ENCODE measurements at regions of chr3 and their contacts with region 1.

Region 1: GRCh38 chr3:43870120-43870519 is 179.4 kb downstream of the ABHD5 start:
- H3K4me3 ChIP-seq: no peak overlapping the region
- H3K27ac ChIP-seq: no peak overlapping the region
- H3K4me1 ChIP-seq: no peaks in the 10 kb centered on the region
- CTCF ChIP-seq: no peak

Region 2: GRCh38 chr3:43279082-43279481 is 591.0 kb before region 1 on chr3:
- CTCF ChIA-PET with region 1: no interaction called
- POLR2A ChIA-PET with region 1: no interaction called
- H3K4me3 ChIP-seq: no peak overlapping the region
- H3K27ac ChIP-seq: no peak overlapping the region
- H3K4me1 ChIP-seq: no peaks in the 10 kb centered on the region
- CTCF ChIP-seq: no peak

Region 3: DNA sequence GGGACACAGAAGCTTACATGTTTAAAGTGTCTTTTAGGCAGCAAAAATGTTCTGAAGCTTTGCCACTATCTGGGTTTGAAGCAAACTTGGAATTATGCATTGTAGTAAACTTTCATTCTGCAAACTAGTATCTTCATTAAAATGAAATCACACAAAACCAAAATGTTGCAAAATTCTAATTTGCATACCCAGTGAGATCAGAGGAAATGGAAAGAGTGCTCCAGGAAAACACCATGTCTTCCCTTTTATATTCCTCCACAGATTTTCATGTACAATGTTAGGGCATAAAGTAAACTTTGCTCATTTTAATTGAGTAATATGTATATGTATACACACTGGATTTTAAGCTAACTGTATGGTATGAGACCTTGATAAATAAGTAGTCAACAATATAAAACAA is 272.2 kb before region 1 on chr3:
- CTCF ChIA-PET with region 1: no interaction called
- POLR2A ChIA-PET with region 1: no interaction called
- H3K4me3 ChIP-seq: no peak overlapping the region
- H3K27ac ChIP-seq: no peak overlapping the region
- H3K4me1 ChIP-seq: no peaks in the 10 kb centered on the region
- CTCF ChIP-seq: no peak

Region 4: GRCh38 chr3:43676441-43676840 is 193.7 kb before region 1 on chr3:
- CTCF ChIA-PET with region 1: no interaction called
- POLR2A ChIA-PET with region 1: no interaction called
- H3K4me3 ChIP-seq: no peak overlapping the region
- H3K27ac ChIP-seq: no peak overlapping the region
- H3K4me1 ChIP-seq: no peaks in the 10 kb centered on the region
- CTCF ChIP-seq: no peak

Region 5: GRCh38 chr3:43855674-43856299 is 14.3 kb before region 1 on chr3:
- CTCF ChIA-PET with region 1: interaction called, 19 read pairs
- POLR2A ChIA-PET with region 1: no interaction called
- H3K4me3 ChIP-seq: no peak overlapping the region
- H3K27ac ChIP-seq: no peak overlapping the region
- H3K4me1 ChIP-seq: no peaks in the 10 kb centered on the region
- CTCF ChIP-seq: no peak

Measured in HEK293 (cell line).